B cell (primary cell): ENCODE measurements at regions of chr3 and their contacts with region 1.

Region 1: DNA sequence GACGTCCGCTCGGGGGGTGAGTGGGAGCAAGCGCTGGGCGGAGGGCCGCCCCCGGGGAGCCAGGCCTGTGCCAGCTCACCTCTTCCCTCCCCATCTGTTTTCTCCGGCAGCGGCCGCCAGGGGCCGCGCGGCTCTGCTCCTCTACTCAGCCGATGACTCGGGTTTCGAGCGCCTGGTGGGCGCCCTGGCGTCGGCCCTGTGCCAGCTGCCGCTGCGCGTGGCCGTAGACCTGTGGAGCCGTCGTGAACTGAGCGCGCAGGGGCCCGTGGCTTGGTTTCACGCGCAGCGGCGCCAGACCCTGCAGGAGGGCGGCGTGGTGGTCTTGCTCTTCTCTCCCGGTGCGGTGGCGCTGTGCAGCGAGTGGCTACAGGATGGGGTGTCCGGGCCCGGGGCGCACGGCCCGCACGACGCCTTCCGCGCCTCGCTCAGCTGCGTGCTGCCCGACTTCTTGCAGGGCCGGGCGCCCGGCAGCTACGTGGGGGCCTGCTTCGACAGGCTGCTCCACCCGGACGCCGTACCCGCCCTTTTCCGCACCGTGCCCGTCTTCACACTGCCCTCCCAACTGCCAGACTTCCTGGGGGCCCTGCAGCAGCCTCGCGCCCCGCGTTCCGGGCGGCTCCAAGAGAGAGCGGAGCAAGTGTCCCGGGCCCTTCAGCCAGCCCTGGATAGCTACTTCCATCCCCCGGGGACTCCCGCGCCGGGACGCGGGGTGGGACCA is 632 bp upstream of the CRELD1 start:
- DNase-seq: peak; percentile 93
- ATAC-seq: peak; percentile 68
- H3K4me3 ChIP-seq: peak overlapping the region in 4 of 5 experiments; percentile 54 to 95 (median 71)
- H3K4me3 Mint-ChIP-seq: peak overlapping the region; percentile 94
- H3K27ac ChIP-seq: peak overlapping the region; percentile 82 to 94
- H3K27ac Mint-ChIP-seq: peak overlapping the region; percentile 98
- H3K4me1 ChIP-seq: peaks cover 22 to 26% of the 10 kb centered on the region in 2 donors
- H3K4me1 Mint-ChIP-seq: peaks cover 39% of the 10 kb centered on the region
- H3K27me3 ChIP-seq: no peaks in the 10 kb centered on the region
- H3K27me3 Mint-ChIP-seq: no peaks in the 10 kb centered on the region
- CTCF ChIP-seq: peak; percentile 85

Region 2: DNA sequence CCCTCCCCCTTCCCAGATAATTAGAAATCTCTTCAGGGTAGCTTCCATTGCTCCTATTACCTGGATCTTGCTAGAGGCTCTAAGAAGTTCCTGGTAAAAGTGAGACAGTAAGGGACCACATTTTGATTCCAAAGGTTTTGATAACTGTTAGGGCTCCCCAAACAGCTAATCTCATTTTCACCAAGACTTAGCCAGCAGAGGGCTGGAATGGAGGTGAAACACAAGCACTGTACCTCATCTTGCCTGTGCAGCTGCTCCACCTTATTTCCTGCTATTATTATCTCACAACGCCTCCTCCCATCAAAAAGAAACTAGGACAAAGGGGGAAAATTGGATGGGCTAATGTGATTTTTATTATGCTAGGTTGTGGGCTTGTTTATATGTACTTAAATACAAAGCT is 528.3 kb before region 1 on chr3:
- CTCF ChIA-PET with region 1: no interaction called
- POLR2A ChIA-PET with region 1: no interaction called
- intact Hi-C with region 1: no loop called
- DNase-seq: no peak
- ATAC-seq: no peak
- H3K4me3 ChIP-seq: no peak overlapping the region
- H3K4me3 Mint-ChIP-seq: peak overlapping the region; percentile 34
- H3K27ac ChIP-seq: peak overlapping the region in 1 of 2 donors; percentile 8
- H3K27ac Mint-ChIP-seq: peak overlapping the region; percentile 2
- H3K4me1 ChIP-seq: peaks cover 46 to 74% of the 10 kb centered on the region in 2 donors
- H3K4me1 Mint-ChIP-seq: peaks cover 77% of the 10 kb centered on the region
- H3K27me3 ChIP-seq: no peaks in the 10 kb centered on the region
- H3K27me3 Mint-ChIP-seq: no peaks in the 10 kb centered on the region
- CTCF ChIP-seq: no peak

Region 3: DNA sequence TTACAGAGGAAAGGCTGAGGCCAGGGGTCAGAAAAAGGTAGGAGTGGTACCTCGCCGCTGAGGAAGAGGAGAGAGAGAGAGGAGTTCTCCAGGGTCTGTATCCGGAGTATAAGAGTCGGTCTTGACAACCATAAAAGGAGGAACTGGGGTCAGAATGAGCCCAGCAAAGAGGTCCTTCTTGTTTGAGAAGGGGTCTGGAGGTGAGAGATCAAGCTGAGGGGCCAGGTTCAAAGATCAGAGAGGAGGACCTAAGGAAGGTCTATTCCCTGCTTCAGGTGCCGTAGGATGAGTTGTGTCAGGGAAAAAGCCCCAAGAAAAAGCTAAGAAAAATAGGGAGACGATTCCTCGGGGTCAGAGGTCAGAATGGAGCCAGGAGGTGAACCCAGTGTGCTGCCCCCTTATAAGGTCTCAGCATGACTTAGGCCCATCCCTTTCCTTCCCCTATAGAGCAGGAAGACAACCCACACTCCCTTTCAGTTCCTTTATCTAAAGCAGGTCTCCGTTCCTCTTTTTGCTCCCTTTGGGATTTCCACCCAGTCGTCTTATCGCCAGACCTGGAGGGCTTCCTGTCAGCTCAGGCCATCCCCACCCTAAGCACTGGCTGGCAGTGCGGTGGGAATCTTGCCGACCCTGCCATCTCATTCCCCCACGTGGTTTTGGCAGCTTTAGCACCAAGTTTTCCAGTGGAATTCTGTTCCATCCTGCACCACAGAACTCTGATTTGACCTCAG is 283.0 kb before region 1 on chr3:
- CTCF ChIA-PET with region 1: no interaction called
- POLR2A ChIA-PET with region 1: no interaction called
- intact Hi-C with region 1: loop called (anchors 2 kb)
- DNase-seq: peak; percentile 81
- ATAC-seq: peak; percentile 44
- H3K4me3 ChIP-seq: peak overlapping the region; percentile 85 to 99 (median 99)
- H3K4me3 Mint-ChIP-seq: peak overlapping the region; percentile 95
- H3K27ac ChIP-seq: peak overlapping the region; percentile 92 to 95
- H3K27ac Mint-ChIP-seq: peak overlapping the region; percentile 97
- H3K4me1 ChIP-seq: peaks cover 43 to 59% of the 10 kb centered on the region in 2 donors
- H3K4me1 Mint-ChIP-seq: peaks cover 48% of the 10 kb centered on the region
- H3K27me3 ChIP-seq: no peaks in the 10 kb centered on the region
- H3K27me3 Mint-ChIP-seq: no peaks in the 10 kb centered on the region
- CTCF ChIP-seq: no peak

Region 4: DNA sequence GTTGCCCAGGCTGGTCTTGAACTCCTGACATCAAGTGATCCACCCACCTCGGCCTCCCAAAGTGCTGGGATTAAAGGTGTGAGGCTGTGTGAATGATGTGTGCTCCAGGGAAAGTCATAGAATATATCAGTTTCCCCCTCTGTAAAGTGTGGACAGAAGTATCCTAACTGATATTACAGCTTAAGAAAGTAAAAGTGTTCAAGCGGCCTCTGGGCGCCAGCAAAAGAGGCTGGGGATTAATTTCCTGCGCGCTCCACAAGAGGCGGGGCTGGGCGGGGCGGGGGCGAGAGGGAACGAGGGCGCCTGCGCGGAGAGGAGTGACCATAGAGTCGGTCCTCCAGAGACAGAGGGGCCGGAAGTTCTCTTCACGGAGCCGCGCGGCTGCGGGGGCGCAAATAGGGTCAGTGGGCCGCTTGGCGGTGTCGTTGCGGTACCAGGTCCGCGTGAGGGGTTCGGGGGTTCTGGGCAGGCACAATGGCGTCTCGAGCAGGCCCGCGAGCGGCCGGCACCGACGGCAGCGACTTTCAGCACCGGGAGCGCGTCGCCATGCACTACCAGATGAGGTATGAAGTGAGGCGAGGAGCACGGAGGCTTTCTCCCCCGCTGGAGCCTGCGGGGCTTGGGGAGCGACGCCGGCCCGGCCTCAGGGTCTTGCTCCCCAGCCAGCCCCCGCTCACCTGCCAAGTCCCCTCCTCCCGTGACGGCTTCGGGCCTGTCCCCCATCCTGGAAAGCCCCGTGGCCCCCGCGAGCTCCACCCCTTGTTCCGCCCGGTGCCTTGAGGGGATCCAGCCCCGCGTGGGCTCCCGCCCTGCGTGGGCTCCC is 42.5 kb before region 1 on chr3 and contains the start of gene JAGN1:
- CTCF ChIA-PET with region 1: interaction called, 15 read pairs
- POLR2A ChIA-PET with region 1: interaction called, 19 read pairs
- intact Hi-C with region 1: loop called (anchors 1 kb)
- DNase-seq: peak; percentile 95
- ATAC-seq: peak; percentile 84
- H3K4me3 ChIP-seq: peak within 1 kb of the TSS; percentile 81 to 99 (median 98)
- H3K4me3 Mint-ChIP-seq: peak within 1 kb of the TSS; percentile 99
- H3K27ac ChIP-seq: peak within 1 kb of the TSS; percentile 100
- H3K27ac Mint-ChIP-seq: peak within 1 kb of the TSS; percentile 99
- H3K4me1 ChIP-seq: peaks cover 17 to 24% of the 10 kb centered on the region in 2 donors
- H3K4me1 Mint-ChIP-seq: peaks cover 38% of the 10 kb centered on the region
- H3K27me3 ChIP-seq: no peaks in the 10 kb centered on the region
- H3K27me3 Mint-ChIP-seq: no peaks in the 10 kb centered on the region
- CTCF ChIP-seq: no peak
- total RNA-seq, gene JAGN1: 25.7 and 26.2 TPM in 2 replicates

Region 5: GRCh38 chr3:9902372-9903237 is 30.4 kb before region 1 on chr3 and contains the start of gene IL17RE:
- CTCF ChIA-PET with region 1: no interaction called
- POLR2A ChIA-PET with region 1: no interaction called
- intact Hi-C with region 1: no loop called
- DNase-seq: no peak
- ATAC-seq: no peak
- H3K4me3 ChIP-seq: no peak within 1 kb of the TSS
- H3K4me3 Mint-ChIP-seq: no peak within 1 kb of the TSS
- H3K27ac ChIP-seq: no peak within 1 kb of the TSS
- H3K27ac Mint-ChIP-seq: no peak within 1 kb of the TSS
- H3K4me1 ChIP-seq: no peaks in the 10 kb centered on the region
- H3K4me1 Mint-ChIP-seq: no peaks in the 10 kb centered on the region
- H3K27me3 ChIP-seq: no peaks in the 10 kb centered on the region
- H3K27me3 Mint-ChIP-seq: peaks cover 4% of the 10 kb centered on the region
- CTCF ChIP-seq: no peak
- total RNA-seq, gene IL17RE: 0.34 TPM in 1 of 2 replicates, not detected in the other

Region 6: GRCh38 chr3:9986237-9986725 is 53.3 kb after region 1 on chr3:
- CTCF ChIA-PET with region 1: interaction called, 15 read pairs
- POLR2A ChIA-PET with region 1: interaction called, 9 read pairs
- intact Hi-C with region 1: no loop called
- DNase-seq: no peak
- ATAC-seq: peak; percentile 28
- H3K4me3 ChIP-seq: peak overlapping the region; percentile 71 to 96 (median 82)
- H3K4me3 Mint-ChIP-seq: peak overlapping the region; percentile 98
- H3K27ac ChIP-seq: peak overlapping the region; percentile 88 to 97
- H3K27ac Mint-ChIP-seq: peak overlapping the region; percentile 100
- H3K4me1 ChIP-seq: peaks cover 16 to 22% of the 10 kb centered on the region in 2 donors
- H3K4me1 Mint-ChIP-seq: peaks cover 28% of the 10 kb centered on the region
- H3K27me3 ChIP-seq: no peaks in the 10 kb centered on the region
- H3K27me3 Mint-ChIP-seq: no peaks in the 10 kb centered on the region
- CTCF ChIP-seq: no peak

Region 7: DNA sequence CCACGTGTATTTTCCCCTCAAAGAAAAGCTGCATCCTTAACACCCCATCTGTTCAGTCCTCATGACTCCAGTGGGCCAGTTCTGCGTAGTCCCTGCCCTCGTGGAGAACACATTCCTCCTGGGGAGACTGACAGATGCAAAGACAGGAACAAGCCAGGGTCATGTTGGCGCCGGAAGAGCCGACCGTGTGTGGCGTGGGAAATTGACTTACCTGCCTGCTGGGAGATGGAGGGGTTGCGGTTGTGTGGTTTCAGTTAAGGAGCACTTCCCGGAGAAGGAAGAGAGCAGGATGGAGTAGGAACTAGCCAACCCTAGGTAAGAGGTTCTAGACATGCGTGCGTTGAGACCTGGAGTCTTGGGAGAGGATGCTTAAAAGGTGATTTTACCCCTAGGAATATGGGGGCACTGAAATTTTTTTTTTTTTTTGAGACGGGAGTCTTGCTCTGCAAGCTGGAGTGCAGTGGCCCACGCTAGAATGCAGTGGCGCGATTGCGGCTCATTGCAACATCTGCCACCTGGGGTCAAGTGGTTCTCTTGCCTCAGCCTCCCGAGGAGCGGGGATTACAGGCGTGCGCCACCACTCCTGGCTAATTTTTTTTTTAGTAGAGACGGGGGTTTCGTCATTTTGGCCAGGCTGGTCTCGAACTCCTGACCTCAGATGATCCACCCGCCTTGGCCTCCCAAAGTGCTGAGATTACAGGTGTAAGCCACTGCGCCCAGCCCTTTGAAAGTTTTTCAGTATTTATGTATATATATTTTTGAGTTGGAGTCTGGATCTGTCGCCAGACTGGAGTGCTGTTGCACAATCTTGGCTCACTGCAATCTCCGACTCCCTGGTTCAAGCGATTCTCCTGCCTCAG is 209.9 kb after region 1 on chr3:
- CTCF ChIA-PET with region 1: interaction called, 5 read pairs
- POLR2A ChIA-PET with region 1: interaction called, 7 read pairs
- intact Hi-C with region 1: loop called (anchors 5 kb)
- DNase-seq: peak; percentile 31
- ATAC-seq: no peak
- H3K4me3 ChIP-seq: peak overlapping the region; percentile 8 to 91 (median 77)
- H3K4me3 Mint-ChIP-seq: peak overlapping the region; percentile 95
- H3K27ac ChIP-seq: peak overlapping the region; percentile 88 to 96
- H3K27ac Mint-ChIP-seq: peak overlapping the region; percentile 97
- H3K4me1 ChIP-seq: peaks cover 28 to 50% of the 10 kb centered on the region in 2 donors
- H3K4me1 Mint-ChIP-seq: peaks cover 32% of the 10 kb centered on the region
- H3K27me3 ChIP-seq: no peaks in the 10 kb centered on the region
- H3K27me3 Mint-ChIP-seq: no peaks in the 10 kb centered on the region
- CTCF ChIP-seq: no peak